MCF 10A (cell line): ENCODE measurements at regions of chr15 and their contacts with region 1.

Region 1: DNA sequence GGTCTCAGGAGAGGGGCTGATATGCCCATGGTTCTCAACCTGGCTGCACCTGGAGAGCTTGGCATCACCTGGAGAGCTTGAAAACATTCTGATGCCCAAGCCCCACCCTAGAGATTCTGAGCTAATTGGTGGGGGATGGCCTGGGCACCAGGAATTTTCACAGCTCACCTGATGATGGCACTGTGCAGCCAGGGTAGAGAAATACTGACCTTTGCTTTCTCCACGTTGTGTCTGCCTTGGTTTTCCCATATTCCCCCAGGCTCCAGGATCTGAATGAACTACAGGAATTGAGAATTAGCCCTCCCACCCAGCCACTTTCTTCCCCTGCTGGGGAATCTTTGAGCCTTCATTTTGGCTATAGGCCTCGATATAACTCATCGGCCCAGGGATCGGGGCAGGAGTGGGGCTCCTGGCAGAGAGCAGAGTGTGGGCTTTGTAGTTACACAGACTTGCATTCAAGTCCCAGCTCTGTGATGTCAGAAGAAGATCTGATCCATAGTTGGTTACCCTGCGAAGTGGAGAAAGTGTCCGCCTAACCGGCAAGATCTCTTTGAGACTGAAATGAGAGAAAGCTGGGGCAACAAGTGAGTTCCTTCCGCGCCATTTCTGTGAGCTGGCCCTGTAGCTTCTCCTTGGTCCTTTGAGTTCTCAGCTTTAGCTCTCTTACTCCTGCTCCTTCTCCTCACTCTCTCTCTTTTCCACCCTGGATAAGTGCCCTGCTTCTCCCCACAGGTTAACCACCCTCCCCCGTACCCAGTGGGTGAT is 33.1 kb upstream of the UBE2Q2 start:
- DNase-seq: peak; percentile 72
- H3K4me3 Mint-ChIP-seq: no peak overlapping the region
- H3K27ac Mint-ChIP-seq: no peak overlapping the region
- H3K4me1 Mint-ChIP-seq: no peaks in the 10 kb centered on the region
- H3K27me3 Mint-ChIP-seq: no peaks in the 10 kb centered on the region
- CTCF ChIP-seq: peak; percentile 73

Region 2: GRCh38 chr15:75823860-75824613 is 13.9 kb after region 1 on chr15:
- CTCF ChIA-PET with region 1: interaction called, 22 read pairs
- POLR2A ChIA-PET with region 1: interaction called, 11 read pairs
- intact Hi-C with region 1: no loop called
- DNase-seq: peak; percentile 15
- H3K4me3 Mint-ChIP-seq: no peak overlapping the region
- H3K27ac Mint-ChIP-seq: no peak overlapping the region
- H3K4me1 Mint-ChIP-seq: peaks cover 14% of the 10 kb centered on the region
- H3K27me3 Mint-ChIP-seq: no peaks in the 10 kb centered on the region
- CTCF ChIP-seq: no peak

Region 3: GRCh38 chr15:75921729-75922703 is 111.8 kb after region 1 on chr15:
- CTCF ChIA-PET with region 1: interaction called, 56 read pairs
- POLR2A ChIA-PET with region 1: interaction called, 12 read pairs
- intact Hi-C with region 1: loop called (anchors 1 kb)
- DNase-seq: peak; percentile 96
- H3K4me3 Mint-ChIP-seq: peak overlapping the region; percentile 59
- H3K27ac Mint-ChIP-seq: peak overlapping the region; percentile 95
- H3K4me1 Mint-ChIP-seq: peaks cover 30% of the 10 kb centered on the region
- H3K27me3 Mint-ChIP-seq: no peaks in the 10 kb centered on the region
- CTCF ChIP-seq: peak; percentile 34

Region 4: DNA sequence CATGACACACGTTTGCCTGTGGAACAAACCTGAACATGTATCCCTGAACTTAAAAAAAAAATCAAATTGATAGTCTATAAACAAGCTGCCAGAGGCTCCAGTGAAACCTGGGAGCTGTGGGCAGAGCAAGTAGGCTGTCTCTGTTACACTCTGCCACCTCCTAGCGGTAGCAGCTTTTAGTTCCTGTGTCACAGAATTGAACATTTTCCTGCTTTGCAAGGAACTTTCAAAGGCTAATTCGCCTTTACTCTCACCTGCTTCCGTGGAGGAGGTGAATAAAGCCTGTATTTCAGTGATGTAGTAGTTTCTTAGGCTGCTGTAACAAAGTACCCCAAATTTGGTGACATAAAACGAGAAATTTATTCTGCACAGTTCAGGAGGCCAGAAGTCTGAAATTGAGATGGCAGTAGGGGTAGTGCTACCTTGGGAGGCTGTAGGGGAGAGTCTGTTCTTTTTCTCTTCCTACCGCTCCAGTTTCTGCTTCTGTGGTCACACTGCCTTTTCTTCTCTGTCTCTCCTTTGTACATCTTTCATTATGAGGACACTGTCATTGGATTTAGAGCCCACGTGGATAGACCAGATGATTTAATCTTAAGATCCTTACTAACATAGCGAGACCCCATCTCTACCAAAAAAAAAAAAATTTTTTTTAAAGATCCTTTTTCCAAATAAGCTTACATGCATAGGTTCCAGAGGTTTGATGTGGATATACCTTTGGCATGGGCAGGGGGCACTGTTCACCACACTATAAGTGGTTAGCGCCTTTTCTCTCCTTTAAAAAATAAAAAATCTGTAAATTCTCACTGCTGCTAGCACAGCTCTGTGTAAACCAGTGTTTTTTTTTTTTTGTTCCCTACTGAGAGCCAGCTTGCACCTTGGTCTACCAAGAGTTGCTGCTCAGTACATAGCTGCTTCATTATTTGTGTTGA is 118.8 kb after region 1 on chr15:
- CTCF ChIA-PET with region 1: interaction called, 56 read pairs
- POLR2A ChIA-PET with region 1: interaction called, 6 read pairs
- intact Hi-C with region 1: loop called (anchors 1 kb)
- DNase-seq: peak; percentile 67
- H3K4me3 Mint-ChIP-seq: no peak overlapping the region
- H3K27ac Mint-ChIP-seq: peak overlapping the region; percentile 7
- H3K4me1 Mint-ChIP-seq: peaks cover 11% of the 10 kb centered on the region
- H3K27me3 Mint-ChIP-seq: no peaks in the 10 kb centered on the region
- CTCF ChIP-seq: peak; percentile 46

Region 5: DNA sequence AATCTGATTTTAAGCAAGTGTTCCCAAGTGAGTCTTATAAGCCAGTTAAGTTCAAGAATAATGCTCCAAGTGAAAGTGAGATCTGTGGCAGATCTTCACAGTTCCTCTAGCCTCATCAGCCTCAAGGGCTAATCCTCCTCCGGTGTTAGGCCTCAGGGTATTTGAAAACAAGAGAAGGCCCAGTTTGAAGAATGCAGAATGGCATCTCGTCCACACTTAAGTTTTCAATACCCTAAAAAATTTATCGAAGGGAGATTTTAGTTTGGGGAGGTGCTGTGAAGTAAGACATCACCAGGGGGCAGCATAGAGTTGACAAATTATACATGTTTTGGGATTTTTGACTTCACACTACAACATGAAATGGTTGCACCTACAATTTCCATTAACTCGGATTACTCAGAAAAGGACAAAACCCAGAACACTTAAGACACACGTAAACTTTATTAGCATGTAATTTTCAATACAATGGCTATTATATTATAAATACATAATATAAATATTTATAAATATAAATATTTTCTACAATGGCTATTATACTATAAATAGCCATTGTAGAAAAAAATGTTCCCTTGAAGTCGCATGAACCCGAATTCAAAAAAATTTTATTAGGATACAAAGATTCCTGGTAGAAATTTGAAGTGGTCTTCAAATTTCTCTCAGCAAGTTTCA is 247.3 kb after region 1 on chr15:
- CTCF ChIA-PET with region 1: interaction called, 10 read pairs
- POLR2A ChIA-PET with region 1: no interaction called
- intact Hi-C with region 1: loop called (anchors 1 kb)
- DNase-seq: peak; percentile 60
- H3K4me3 Mint-ChIP-seq: peak overlapping the region; percentile 38
- H3K27ac Mint-ChIP-seq: peak overlapping the region; percentile 21
- H3K4me1 Mint-ChIP-seq: peaks cover 15% of the 10 kb centered on the region
- H3K27me3 Mint-ChIP-seq: peaks cover 21% of the 10 kb centered on the region
- CTCF ChIP-seq: peak; percentile 61

Region 6: GRCh38 chr15:76150971-76151598 is 340.9 kb after region 1 on chr15:
- CTCF ChIA-PET with region 1: interaction called, 10 read pairs
- POLR2A ChIA-PET with region 1: interaction called, 5 read pairs
- intact Hi-C with region 1: no loop called
- DNase-seq: peak; percentile 81
- H3K4me3 Mint-ChIP-seq: no peak overlapping the region
- H3K27ac Mint-ChIP-seq: no peak overlapping the region
- H3K4me1 Mint-ChIP-seq: peaks cover 10% of the 10 kb centered on the region
- H3K27me3 Mint-ChIP-seq: no peaks in the 10 kb centered on the region
- CTCF ChIP-seq: peak; percentile 90